PC-3 (cell line): ENCODE measurements at regions of chr10 and their contacts with region 1.

Region 1: GRCh38 chr10:123272171-123272570 is 118.0 kb downstream of the BUB3 start:
- DNase-seq: peak; percentile 25
- ATAC-seq: no peak
- H3K4me3 ChIP-seq: no peak overlapping the region
- H3K27ac ChIP-seq: no peak overlapping the region
- H3K4me1 ChIP-seq: peaks cover 13% of the 10 kb centered on the region; the same call in 1 of the 2 replicates
- H3K27me3 ChIP-seq: no peaks in the 10 kb centered on the region
- CTCF ChIP-seq: peak; percentile 49

Region 2: DNA sequence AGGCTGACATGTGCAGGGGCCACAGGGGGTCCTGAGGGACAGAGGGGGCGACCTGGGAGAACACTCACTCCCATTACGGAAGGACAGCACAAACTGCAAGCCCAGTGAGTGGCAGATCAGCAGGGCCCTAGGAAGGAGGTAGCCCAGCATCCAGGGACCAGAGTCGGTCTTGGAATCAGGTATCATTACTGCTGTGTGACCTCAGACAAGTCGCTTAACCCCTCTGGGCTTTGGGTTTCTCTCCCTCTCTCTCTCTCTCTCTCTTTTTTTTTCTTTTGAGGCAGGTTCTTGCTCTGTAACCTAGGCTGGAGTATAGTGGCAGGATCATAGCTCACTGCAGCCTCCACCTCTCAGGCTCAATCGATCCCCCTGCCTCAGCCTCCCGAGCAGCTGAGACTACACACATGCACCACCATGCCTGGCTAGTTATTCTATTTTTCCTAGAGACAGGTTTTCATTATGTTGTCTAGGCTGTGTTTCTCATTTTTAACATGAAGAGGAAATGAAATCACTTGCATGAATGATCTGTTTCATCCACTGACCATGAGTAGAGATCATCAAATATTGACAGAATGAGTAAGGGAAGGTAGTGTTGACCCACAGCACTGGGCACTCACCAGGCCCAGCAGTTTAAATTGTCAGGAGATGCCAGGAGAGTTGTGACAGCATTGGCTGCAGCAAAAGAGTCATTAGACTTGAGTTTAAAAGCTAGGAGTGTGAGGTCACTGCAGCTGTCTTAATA is 68.6 kb before region 1 on chr10:
- CTCF ChIA-PET with region 1: no interaction called
- POLR2A ChIA-PET with region 1: no interaction called
- intact Hi-C with region 1: loop called (anchors 10 kb)
- DNase-seq: peak; percentile 90
- ATAC-seq: peak; percentile 97
- H3K4me3 ChIP-seq: no peak overlapping the region
- H3K27ac ChIP-seq: peak overlapping the region; percentile 97
- H3K4me1 ChIP-seq: peaks cover 34% of the 10 kb centered on the region
- H3K27me3 ChIP-seq: no peaks in the 10 kb centered on the region
- CTCF ChIP-seq: no peak